Lower leg skin (tissue), 4 donors: ENCODE measurements at regions of chr2 and their contacts with region 1.

Region 1: DNA sequence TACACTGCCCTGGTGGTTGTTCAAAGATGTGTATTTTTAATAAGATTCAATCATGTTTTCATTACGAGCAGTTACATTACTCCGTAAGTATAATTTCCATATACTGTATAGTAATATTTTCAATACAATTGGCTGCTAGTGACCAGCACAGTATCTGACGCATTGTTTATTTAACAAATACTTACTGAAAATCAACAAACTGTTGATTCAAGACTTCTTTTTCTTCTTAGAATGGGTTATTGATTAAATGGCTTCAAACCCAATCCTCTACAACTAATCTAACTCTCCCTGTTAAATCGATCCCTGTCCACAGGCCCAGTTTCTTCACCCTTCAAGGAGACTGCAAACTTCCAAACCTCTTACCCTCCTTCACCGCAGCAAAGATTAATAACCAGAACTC is 18.5 kb downstream of the COBLL1 start:
- DNase-seq: no peak
- H3K4me3 ChIP-seq: no peak overlapping the region
- CTCF ChIP-seq: no peak
- POLR2A ChIP-seq: no peak

Region 2: DNA sequence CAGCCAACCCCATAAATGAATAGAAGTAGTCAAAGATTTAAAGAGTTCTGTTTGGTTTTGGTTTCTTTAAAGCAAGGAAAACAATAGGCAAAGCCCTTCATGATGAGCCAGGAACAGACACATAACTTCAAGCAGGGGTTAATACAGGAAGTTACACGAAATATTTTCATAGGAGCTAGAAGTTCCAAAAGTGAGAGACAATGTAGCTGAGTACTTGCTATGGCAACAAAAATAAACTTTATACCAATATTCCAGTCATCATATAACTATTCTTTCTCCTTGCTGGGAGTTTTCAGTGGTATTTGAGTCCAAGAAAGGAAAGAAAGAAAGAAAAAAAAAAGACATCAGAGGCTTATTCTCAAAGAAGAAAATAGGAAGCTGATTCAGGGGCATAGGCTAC is 37.7 kb before region 1 on chr2:
- intact Hi-C with region 1: loop called (anchors 1 kb)
- DNase-seq: no peak
- H3K4me3 ChIP-seq: no peak overlapping the region
- CTCF ChIP-seq: no peak
- POLR2A ChIP-seq: no peak

Region 3: GRCh38 chr2:164868563-164869419 is 45.7 kb after region 1 on chr2:
- intact Hi-C with region 1: no loop called
- DNase-seq: no peak
- H3K4me3 ChIP-seq: no peak overlapping the region
- CTCF ChIP-seq: no peak
- POLR2A ChIP-seq: no peak